AG04449 (cell line): ENCODE measurements at regions of chr2 and their contacts with region 1.

Region 1: GRCh38 chr2:159118115-159118858 is 149.8 kb downstream of the TANC1 start:
- DNase-seq: no peak
- H3K4me3 ChIP-seq: no peak overlapping the region
- CTCF ChIP-seq: peak; percentile 83

Region 2: GRCh38 chr2:158893026-158893425 is 225.3 kb before region 1 on chr2:
- CTCF ChIA-PET with region 1: interaction called, 17 read pairs
- POLR2A ChIA-PET with region 1: no interaction called
- DNase-seq: no peak
- H3K4me3 ChIP-seq: no peak overlapping the region
- CTCF ChIP-seq: no peak

Region 3: GRCh38 chr2:158914731-158915130 is 203.6 kb before region 1 on chr2:
- CTCF ChIA-PET with region 1: interaction called, 30 read pairs
- POLR2A ChIA-PET with region 1: no interaction called
- DNase-seq: no peak
- H3K4me3 ChIP-seq: no peak overlapping the region
- CTCF ChIP-seq: no peak

Region 4: GRCh38 chr2:158968396-158969161 is 149.7 kb before region 1 on chr2 and contains the start of gene TANC1:
- CTCF ChIA-PET with region 1: interaction called, 35 read pairs
- POLR2A ChIA-PET with region 1: no interaction called
- DNase-seq: no peak
- H3K4me3 ChIP-seq: peak within 1 kb of the TSS; percentile 80
- CTCF ChIP-seq: no peak

Region 5: GRCh38 chr2:158998551-158999248 is 119.6 kb before region 1 on chr2:
- CTCF ChIA-PET with region 1: interaction called, 11 read pairs
- POLR2A ChIA-PET with region 1: no interaction called
- DNase-seq: peak; percentile 7
- H3K4me3 ChIP-seq: no peak overlapping the region
- CTCF ChIP-seq: no peak

Region 6: DNA sequence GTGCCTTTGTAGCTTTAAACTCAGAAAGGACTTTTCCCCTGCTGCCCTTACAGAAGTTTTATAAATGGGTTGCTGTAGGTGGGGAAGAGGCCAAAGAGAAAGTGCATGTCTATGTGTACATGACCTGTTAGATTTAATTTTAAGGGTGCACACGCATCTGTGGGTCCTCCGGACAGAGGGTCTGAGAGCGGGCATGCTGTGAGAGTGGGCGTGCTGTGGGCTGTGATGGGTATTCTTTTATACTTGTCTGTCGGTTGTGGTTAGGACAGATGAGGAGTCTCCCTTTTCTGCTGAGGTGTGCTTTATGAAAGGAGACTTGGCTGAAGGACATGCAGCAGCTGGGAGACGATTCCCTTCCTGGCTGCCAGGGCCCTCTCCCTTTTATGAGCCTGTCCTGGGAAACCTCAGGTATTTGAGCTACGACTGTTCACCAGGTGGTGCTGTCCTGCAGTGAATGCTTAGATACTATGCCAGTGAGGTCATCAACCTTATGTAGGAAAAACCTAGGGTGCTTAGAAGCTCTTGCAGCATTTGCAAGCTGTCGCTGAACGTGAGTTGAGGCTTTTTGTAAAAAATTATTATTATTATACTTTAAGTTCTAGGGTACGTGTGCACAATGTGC is 82.4 kb before region 1 on chr2:
- CTCF ChIA-PET with region 1: interaction called, 18 read pairs
- POLR2A ChIA-PET with region 1: no interaction called
- DNase-seq: no peak
- H3K4me3 ChIP-seq: no peak overlapping the region
- CTCF ChIP-seq: no peak

Region 7: DNA sequence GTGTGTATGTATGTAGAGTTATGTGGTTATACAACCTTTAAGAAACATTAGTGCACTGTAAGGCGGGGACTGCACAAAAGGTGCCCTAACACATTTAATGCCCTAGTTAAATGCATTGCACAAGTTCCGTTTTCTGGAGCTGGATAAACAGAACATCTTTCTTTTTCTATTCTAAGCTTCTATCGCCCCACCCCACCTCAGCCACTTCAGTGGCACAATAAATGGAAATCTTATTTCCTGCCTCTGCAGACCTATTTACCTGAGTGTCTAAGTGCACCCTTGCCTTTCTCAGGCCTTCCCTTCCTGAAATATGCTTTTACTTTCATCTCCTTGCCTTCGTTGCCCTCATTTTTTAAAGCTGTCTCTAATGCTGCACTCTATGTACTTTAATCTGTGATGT is 26.3 kb before region 1 on chr2:
- CTCF ChIA-PET with region 1: interaction called, 13 read pairs
- POLR2A ChIA-PET with region 1: no interaction called
- DNase-seq: no peak
- H3K4me3 ChIP-seq: no peak overlapping the region
- CTCF ChIP-seq: no peak